ENCODE measurements at regions of chr4 and their contacts with region 1.

Region 1: DNA sequence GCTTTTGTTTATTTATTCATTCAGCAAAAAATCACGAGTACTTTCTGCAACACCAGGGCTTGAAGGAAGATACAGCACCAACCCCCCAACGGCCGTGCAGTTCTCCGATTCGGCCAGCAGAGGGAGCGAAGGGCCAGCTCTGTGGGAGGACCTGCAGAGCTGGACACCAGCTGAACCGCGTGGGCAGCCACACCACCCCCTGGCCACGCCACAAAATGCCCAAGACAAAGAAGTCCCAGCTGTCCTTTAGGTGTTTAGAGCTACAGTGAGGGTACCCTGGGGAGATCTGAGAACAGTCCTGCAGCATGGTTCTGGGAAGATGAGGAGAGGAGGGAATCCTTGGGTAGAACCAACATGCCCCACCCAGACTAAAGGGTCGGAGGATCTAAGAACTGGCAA is 83.1 kb downstream of the RELL1 start:
- DNase-seq: peak; percentile 53
- ATAC-seq: peak; percentile 95
- H3K4me3 ChIP-seq: 0 out of 4 replicates have a peak overlapping the region, but pooled peaks of 1 of the 2 experiments have one; percentile 16
- H3K27ac ChIP-seq: no peak overlapping the region
- H3K4me1 ChIP-seq: no peaks in the 10 kb centered on the region
- H3K27me3 ChIP-seq: no peaks in the 10 kb centered on the region
- CTCF ChIP-seq: peak; percentile 91

Region 2: GRCh38 chr4:37326852-37327251 is 276.2 kb before region 1 on chr4:
- CTCF ChIA-PET with region 1: no interaction called
- POLR2A ChIA-PET with region 1: no interaction called
- in situ Hi-C with region 1: no loop called
- intact Hi-C with region 1: no loop called
- DNase-seq: no peak
- ATAC-seq: no peak
- H3K4me3 ChIP-seq: no peak overlapping the region
- H3K27ac ChIP-seq: no peak overlapping the region
- H3K4me1 ChIP-seq: no peaks in the 10 kb centered on the region
- H3K27me3 ChIP-seq: no peaks in the 10 kb centered on the region
- CTCF ChIP-seq: no peak

Region 3: DNA sequence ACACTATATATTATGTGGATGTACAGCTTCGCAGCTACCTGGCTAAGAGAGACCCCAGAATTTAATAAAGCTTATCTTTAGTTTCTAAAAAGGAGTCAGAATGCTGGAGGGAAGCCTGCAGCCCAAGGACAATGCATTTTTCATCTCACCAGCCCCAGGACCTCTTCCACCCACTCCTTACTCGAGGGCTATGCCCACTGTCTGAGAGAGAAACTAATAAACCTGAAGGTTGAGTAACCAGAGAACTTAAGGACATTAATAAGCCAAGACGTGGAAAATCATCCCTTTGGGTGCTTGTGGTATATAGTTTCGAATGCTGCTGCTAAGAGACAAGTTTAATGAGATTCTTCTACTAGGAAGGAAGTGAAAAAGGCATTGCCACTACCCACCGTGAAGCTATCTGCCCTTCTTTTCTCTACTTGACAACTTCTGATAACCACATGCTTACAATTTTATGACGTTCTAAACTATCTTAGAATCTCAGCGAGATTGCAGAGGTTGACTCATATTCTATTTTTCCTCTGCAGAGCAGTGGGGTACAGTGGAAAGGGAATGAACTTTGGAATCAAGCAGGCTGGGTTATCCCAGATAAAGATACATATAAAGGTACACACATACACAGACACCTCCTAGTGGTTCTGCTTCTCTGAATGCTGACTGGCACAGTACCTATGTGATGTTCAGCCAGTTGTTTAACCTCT is 79.8 kb after region 1 on chr4:
- CTCF ChIA-PET with region 1: no interaction called
- POLR2A ChIA-PET with region 1: no interaction called
- in situ Hi-C with region 1: no loop called
- intact Hi-C with region 1: loop called (anchors 5 kb)
- DNase-seq: no peak
- ATAC-seq: no peak
- H3K4me3 ChIP-seq: no peak overlapping the region
- H3K27ac ChIP-seq: no peak overlapping the region
- H3K4me1 ChIP-seq: peaks cover 9% of the 10 kb centered on the region; the same call in 1 of the 2 replicates
- H3K27me3 ChIP-seq: no peaks in the 10 kb centered on the region
- CTCF ChIP-seq: peak; percentile 43; the same call in 1 of the 2 replicates

Region 4: GRCh38 chr4:37908488-37909331 is 305.6 kb after region 1 on chr4:
- CTCF ChIA-PET with region 1: interaction called, 12 read pairs
- POLR2A ChIA-PET with region 1: no interaction called
- in situ Hi-C with region 1: no loop called
- intact Hi-C with region 1: no loop called
- DNase-seq: no peak
- ATAC-seq: no peak
- H3K4me3 ChIP-seq: no peak overlapping the region
- H3K27ac ChIP-seq: no peak overlapping the region
- H3K4me1 ChIP-seq: no peaks in the 10 kb centered on the region
- H3K27me3 ChIP-seq: peaks cover 4% of the 10 kb centered on the region
- CTCF ChIP-seq: no peak

Measured in Panc1 (cell line).